ENCODE measurements at regions of chr6 and their contacts with region 1.

Region 1: DNA sequence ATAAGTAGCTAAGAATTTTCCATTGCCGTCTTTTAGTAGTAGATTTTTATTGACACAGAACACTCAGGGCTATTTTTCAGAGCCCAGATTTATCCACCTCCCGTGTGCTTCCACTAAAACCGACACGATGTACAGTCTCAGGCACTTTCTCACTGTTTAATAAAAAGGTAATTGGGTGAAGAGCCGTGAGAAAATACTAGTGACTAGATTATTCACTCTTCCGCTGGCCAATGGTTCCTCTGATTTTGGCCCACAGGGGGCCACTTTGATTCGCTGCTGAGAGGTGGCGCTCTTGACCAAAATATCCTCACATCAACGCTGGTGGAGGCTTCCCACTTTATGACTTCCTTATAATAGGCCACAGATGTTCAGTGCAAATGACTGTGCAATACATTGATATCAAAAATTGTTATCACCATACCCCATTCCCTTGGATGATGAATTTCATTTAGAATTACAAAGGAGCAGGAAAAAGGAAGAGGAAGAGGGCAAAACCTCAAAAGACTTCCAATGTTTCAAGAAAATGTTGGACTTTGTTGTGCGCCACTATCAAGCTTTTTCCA is 12.3 kb upstream of the HDDC2 start:
- DNase-seq: no peak
- H3K4me3 ChIP-seq: no peak overlapping the region
- CTCF ChIP-seq: peak; percentile 71

Region 2: GRCh38 chr6:124870611-124871459 is 443.3 kb before region 1 on chr6:
- CTCF ChIA-PET with region 1: interaction called, 25 read pairs
- POLR2A ChIA-PET with region 1: no interaction called
- DNase-seq: no peak
- H3K4me3 ChIP-seq: no peak overlapping the region
- CTCF ChIP-seq: peak; percentile 49

Region 3: DNA sequence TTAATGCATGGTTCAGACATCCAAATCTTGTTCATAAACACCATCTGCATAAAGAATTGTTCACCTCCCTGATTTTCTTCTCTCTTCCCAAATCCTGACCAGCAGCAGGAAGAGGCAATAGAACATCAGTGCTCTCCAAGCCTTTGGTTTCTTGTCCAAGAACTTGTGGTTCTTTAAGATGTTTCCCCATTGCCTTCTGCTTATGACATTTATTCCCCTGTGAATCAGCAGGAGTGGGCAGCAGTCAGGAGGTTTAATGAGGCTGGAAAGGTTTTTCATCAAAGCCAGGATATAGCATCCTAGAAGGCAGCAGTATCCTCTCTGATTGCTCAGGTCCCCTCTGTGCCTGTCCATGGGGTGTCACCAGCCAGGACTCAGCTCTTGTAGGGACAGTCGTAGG is 17.6 kb before region 1 on chr6:
- CTCF ChIA-PET with region 1: interaction called, 19 read pairs
- POLR2A ChIA-PET with region 1: no interaction called
- DNase-seq: no peak
- H3K4me3 ChIP-seq: no peak overlapping the region
- CTCF ChIP-seq: no peak

Region 4: GRCh38 chr6:125749173-125749864 is 435.2 kb after region 1 on chr6 and contains the start of gene HEY2:
- CTCF ChIA-PET with region 1: interaction called, 488 read pairs
- POLR2A ChIA-PET with region 1: no interaction called
- DNase-seq: no peak
- H3K4me3 ChIP-seq: peak within 1 kb of the TSS; percentile 61
- CTCF ChIP-seq: peak; percentile 9

Region 5: GRCh38 chr6:125779924-125780539 is 465.9 kb after region 1 on chr6:
- CTCF ChIA-PET with region 1: interaction called, 15 read pairs
- POLR2A ChIA-PET with region 1: no interaction called
- DNase-seq: no peak
- H3K4me3 ChIP-seq: peak overlapping the region; percentile 73
- CTCF ChIP-seq: no peak